ENCODE measurements at regions of chr16 and their contacts with region 1.

Region 1: DNA sequence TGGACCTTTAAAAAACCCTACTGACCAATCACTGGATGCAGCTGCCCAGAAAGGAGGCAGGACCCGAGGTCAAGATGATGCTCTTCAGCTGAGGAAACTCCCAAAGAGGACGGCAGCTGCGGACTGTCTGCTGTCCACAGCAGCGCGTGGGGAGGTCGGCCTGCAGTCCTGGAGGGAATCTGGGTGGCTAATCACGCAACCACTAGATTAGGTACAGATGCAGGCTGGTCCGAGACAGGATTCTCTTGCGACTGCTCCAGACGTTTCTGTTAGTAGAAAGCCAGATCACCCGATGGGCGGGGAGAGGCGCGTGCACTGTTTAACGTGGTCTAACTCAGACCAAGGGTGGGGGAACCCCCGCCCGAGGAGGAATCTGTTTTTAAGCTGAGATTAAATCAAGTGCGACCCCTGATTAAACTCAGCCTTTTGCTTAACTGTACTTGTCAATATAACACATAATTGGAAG is 8.8 kb downstream of the CTRB2 start:
- DNase-seq: no peak
- H3K4me3 ChIP-seq: no peak overlapping the region
- CTCF ChIP-seq: no peak

Region 2: DNA sequence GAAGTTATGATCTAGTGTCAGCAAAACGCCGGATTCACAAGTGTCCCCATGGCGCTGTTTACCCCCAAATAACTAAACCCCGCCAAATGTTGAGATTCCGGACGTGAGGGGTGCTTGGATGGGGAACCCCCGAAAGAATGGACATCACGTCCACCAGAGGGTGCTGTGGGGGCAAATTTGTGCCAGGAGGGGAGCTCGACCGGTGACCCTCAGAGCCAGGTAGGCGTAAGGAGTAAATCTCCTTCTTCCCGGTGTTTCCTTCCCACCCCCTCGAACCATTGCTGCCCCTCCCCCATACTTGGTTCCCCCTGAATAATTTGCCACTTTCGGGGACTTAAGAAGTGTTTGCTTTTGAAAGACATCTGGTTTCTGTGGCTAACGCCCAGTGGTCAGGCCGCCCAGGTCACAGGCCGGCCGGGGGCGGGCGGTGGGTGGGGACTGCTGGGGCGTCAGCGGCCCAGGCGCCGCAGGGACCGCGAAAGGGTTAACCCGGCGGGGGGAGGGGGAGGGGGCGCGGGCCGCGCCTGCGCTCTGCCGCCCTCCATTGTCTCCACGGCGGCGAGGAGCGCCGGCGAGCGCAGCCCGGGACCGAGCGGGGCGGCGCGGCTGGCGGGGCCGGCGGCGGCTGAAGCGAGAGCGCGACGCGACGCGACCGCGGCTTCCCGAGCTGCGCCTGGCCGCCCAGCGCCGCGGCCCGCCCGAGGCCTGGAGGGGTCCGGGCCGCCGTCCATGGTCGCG is 199.5 kb before region 1 on chr16 and contains the start of gene ZNRF1:
- CTCF ChIA-PET with region 1: interaction called, 11 read pairs
- POLR2A ChIA-PET with region 1: no interaction called
- DNase-seq: no peak
- H3K4me3 ChIP-seq: peak within 1 kb of the TSS; percentile 61
- CTCF ChIP-seq: peak; percentile 78

Region 3: DNA sequence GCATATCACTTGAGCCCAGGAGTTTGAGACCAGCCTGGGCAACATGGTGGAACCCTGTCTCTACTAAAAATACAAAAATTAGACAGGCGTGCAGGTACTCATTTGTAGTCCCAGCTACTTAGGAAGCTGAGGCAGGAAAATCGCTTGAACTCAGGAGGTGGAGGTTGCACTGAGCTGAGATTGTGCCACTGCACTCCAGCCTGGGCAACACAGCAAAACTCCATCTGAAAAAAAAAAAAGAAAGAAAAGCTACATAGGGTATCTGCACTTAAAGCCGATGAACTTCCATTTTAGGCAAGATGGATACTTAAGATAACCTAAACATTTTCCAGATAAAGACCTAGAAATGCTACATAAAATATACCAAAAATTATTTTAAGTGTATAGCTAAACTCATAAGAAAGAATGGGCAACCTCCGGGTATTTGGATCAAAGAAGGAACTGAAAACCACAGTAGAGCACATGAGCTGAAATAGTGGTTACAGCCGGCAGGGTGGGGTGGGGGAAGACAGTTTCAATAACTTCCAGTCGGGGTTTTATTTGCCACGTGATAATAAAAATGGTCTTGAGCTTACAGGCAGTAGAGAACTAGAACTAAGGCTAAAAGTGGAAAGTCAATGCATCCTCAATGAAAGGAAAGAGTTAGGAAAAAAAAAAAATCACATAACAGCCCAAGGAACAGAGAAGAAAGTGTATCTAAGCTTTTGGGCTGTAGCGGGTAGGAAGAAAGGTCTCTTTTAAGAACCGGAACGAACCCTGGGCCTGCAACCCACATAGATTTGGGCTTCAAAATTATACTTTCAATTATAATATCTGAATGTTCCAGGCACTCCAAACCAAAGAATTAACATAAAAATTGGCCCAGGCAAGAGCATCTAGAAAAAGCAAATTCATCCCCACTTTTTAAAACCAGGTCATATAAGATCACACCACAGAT is 182.0 kb after region 1 on chr16:
- CTCF ChIA-PET with region 1: interaction called, 59 read pairs
- POLR2A ChIA-PET with region 1: no interaction called
- DNase-seq: no peak
- H3K4me3 ChIP-seq: no peak overlapping the region
- CTCF ChIP-seq: no peak

Region 4: GRCh38 chr16:75415169-75415905 is 217.2 kb after region 1 on chr16:
- CTCF ChIA-PET with region 1: interaction called, 18 read pairs
- POLR2A ChIA-PET with region 1: no interaction called
- DNase-seq: no peak
- H3K4me3 ChIP-seq: no peak overlapping the region
- CTCF ChIP-seq: no peak

Region 5: GRCh38 chr16:75443298-75443697 is 245.1 kb after region 1 on chr16:
- CTCF ChIA-PET with region 1: interaction called, 15 read pairs
- POLR2A ChIA-PET with region 1: no interaction called
- DNase-seq: peak; percentile 66
- H3K4me3 ChIP-seq: no peak overlapping the region
- CTCF ChIP-seq: no peak

Region 6: GRCh38 chr16:75519881-75520280 is 321.7 kb after region 1 on chr16:
- CTCF ChIA-PET with region 1: interaction called, 10 read pairs
- POLR2A ChIA-PET with region 1: no interaction called
- DNase-seq: no peak
- H3K4me3 ChIP-seq: no peak overlapping the region
- CTCF ChIP-seq: no peak

Measured in AG04449 (cell line).